ENCODE measurements at regions of chr1 and their contacts with region 1.

Region 1: DNA sequence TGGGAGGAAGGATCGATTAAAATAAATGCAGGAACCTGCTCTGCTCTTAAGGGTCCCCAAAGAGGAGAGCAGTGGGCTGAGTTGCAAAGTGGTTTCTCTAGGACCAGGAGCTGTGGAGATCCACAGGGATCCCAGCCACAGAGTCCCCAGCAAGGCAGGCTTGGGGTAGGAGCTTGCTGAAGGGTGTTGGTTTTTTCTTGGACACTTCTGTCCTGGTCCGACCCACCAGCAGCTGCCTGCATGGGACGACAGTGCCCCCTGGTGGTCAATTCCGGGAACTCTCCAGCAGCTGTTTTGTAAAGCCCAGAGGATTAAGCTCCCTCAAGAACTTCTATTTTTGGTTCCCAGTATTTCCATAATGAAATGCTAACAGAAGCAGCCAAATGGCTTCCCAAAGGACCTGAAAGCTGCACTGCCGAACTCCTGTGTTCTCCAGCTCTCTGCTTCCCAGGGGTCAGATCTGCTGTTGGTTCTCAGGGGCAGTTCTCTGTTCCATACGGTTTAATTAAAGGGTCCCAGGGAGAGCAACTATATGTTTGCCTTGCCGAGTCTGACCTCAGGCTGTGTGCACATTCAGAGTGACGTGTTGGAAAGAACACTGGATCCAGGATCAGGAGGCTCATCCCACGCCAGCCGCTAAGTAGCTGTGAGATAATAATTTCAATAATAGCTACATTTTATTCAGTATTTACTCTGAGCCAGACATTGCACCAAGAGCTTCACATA is 23.2 kb downstream of the NENF start:
- DNase-seq: peak; percentile 72
- H3K4me3 ChIP-seq: peak overlapping the region; percentile 4; the same call in 1 of the 2 replicates
- H3K27ac ChIP-seq: no peak overlapping the region
- H3K27me3 ChIP-seq: no peaks in the 10 kb centered on the region
- CTCF ChIP-seq: peak; percentile 96

Region 2: DNA sequence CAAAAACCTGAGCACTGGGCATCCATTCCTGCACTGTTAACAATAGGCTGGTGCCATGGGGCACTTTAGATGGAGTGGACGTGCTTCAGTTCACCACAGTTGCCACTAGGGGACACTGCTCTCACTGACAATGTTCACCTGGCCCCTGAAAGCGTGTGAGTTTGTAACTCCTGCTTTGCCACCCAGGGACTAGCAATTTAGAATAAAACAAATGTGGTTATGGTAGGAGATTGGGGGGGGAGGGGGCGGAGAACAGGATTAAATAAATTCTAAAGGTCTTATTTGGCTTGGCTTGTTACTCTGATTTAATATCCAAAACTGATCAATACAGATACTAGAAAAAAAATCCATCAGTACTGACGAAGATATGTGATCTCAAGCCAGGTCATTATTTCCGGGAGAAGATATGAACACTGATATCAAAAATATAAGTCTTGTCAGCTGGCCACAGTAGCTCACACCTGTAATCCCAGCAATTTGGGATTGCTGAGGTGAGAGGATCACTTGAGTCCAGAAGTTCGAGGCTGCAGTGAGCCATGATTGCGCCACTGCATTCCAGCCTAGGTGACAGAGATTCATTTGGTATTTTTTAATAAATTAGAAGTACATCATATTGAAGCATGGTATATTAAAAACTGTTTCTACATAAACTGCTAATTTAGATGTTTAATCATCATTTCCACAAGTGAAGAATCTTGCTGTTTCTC is 443.8 kb before region 1 on chr1:
- CTCF ChIA-PET with region 1: interaction called, 11 read pairs
- POLR2A ChIA-PET with region 1: no interaction called
- DNase-seq: no peak
- H3K4me3 ChIP-seq: no peak overlapping the region
- H3K27ac ChIP-seq: no peak overlapping the region
- H3K27me3 ChIP-seq: no peaks in the 10 kb centered on the region
- CTCF ChIP-seq: peak; percentile 99

Region 3: GRCh38 chr1:212291505-212292134 is 164.3 kb before region 1 on chr1:
- CTCF ChIA-PET with region 1: interaction called, 13 read pairs
- POLR2A ChIA-PET with region 1: no interaction called
- DNase-seq: no peak
- H3K4me3 ChIP-seq: no peak overlapping the region
- H3K27ac ChIP-seq: no peak overlapping the region
- H3K27me3 ChIP-seq: no peaks in the 10 kb centered on the region
- CTCF ChIP-seq: peak; percentile 75

Region 4: GRCh38 chr1:212375986-212376385 is 80.0 kb before region 1 on chr1:
- CTCF ChIA-PET with region 1: interaction called, 16 read pairs
- POLR2A ChIA-PET with region 1: no interaction called
- DNase-seq: no peak
- H3K4me3 ChIP-seq: no peak overlapping the region
- H3K27ac ChIP-seq: no peak overlapping the region
- H3K27me3 ChIP-seq: no peaks in the 10 kb centered on the region
- CTCF ChIP-seq: no peak

Region 5: GRCh38 chr1:212469701-212470458 is 13.9 kb after region 1 on chr1:
- CTCF ChIA-PET with region 1: interaction called, 113 read pairs
- POLR2A ChIA-PET with region 1: interaction called, 5 read pairs
- DNase-seq: peak; percentile 96
- H3K4me3 ChIP-seq: no peak overlapping the region
- H3K27ac ChIP-seq: peak overlapping the region; percentile 91
- H3K27me3 ChIP-seq: peaks cover 4% of the 10 kb centered on the region
- CTCF ChIP-seq: no peak

Region 6: DNA sequence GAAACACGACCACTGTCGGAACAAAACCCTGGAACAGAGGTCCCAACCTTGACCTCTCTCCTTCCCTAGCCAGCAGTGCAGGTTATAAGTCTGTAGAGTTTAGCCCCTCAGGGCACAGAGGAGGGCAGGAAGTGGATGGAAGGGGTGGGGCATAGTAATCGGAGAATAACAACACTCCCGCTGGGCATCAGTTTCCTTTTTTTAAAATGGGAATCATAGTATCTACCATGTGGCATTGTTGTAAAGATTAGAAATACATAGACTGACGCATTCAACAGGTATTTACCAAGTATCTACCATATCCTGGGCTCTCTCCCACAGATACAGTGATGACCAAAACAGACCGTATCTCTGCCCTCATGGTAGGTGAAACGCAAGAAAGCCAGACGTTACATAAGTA is 127.7 kb after region 1 on chr1:
- CTCF ChIA-PET with region 1: no interaction called
- POLR2A ChIA-PET with region 1: no interaction called
- DNase-seq: no peak
- H3K4me3 ChIP-seq: no peak overlapping the region
- H3K27ac ChIP-seq: no peak overlapping the region
- H3K27me3 ChIP-seq: peaks cover 18% of the 10 kb centered on the region
- CTCF ChIP-seq: no peak